ENCODE measurements at regions of chr17 and their contacts with region 1.

Region 1: GRCh38 chr17:2029911-2030778 is at the start of gene DPH1:
- DNase-seq: peak; percentile 91
- H3K4me3 Mint-ChIP-seq: peak within 1 kb of the TSS; percentile 94
- H3K27ac Mint-ChIP-seq: peak within 1 kb of the TSS; percentile 61
- H3K4me1 Mint-ChIP-seq: peaks cover 29% of the 10 kb centered on the region
- H3K27me3 Mint-ChIP-seq: peaks cover 24% of the 10 kb centered on the region
- total RNA-seq, gene DPH1: 31.1 to 34.1 TPM

Region 2: DNA sequence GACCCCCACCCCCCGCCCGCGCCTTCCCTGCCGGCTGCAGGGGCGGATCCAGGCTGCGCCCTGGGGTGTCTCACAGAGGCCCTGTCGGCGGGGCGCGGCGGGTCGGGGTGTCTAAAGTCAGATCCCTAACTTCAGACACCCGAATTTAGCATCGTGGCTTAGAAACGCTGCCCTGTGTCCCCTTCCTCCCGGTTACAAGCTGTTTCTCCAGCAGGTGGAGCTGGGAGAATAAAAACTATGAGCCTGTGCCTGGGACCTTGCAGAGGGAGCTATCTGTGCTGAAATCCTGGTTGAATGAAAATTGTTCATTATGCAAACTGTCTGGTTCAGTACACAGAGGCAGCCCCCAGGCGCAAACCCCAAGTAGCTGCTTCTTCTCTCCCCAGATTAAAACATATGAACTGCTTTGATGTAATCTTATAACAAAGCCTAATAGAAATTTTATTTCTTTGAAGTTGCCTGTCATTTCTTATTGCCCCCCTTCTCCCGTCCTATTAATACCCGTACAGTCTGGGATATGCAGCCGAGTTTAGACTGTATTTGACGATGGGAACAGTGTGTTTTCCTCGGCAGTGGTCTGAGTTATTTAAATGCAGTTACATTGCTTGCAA is 121.3 kb before region 1 on chr17:
- CTCF ChIA-PET with region 1: interaction called, 8 read pairs
- intact Hi-C with region 1: loop called (anchors 1 kb)
- DNase-seq: peak; percentile 68
- H3K4me3 Mint-ChIP-seq: peak overlapping the region; percentile 18
- H3K27ac Mint-ChIP-seq: no peak overlapping the region
- H3K4me1 Mint-ChIP-seq: peaks cover 8% of the 10 kb centered on the region
- H3K27me3 Mint-ChIP-seq: peaks cover 51% of the 10 kb centered on the region

Region 3: GRCh38 chr17:2041561-2042366 is 11.6 kb after region 1 on chr17 and contains the start of gene OVCA2:
- CTCF ChIA-PET with region 1: no interaction called
- intact Hi-C with region 1: loop called (anchors 1 kb)
- DNase-seq: peak; percentile 97
- H3K4me3 Mint-ChIP-seq: peak within 1 kb of the TSS; percentile 94
- H3K27ac Mint-ChIP-seq: peak within 1 kb of the TSS; percentile 93
- H3K4me1 Mint-ChIP-seq: peaks cover 27% of the 10 kb centered on the region
- H3K27me3 Mint-ChIP-seq: no peaks in the 10 kb centered on the region
- total RNA-seq, gene OVCA2: 22.7 to 24.7 TPM

Region 4: DNA sequence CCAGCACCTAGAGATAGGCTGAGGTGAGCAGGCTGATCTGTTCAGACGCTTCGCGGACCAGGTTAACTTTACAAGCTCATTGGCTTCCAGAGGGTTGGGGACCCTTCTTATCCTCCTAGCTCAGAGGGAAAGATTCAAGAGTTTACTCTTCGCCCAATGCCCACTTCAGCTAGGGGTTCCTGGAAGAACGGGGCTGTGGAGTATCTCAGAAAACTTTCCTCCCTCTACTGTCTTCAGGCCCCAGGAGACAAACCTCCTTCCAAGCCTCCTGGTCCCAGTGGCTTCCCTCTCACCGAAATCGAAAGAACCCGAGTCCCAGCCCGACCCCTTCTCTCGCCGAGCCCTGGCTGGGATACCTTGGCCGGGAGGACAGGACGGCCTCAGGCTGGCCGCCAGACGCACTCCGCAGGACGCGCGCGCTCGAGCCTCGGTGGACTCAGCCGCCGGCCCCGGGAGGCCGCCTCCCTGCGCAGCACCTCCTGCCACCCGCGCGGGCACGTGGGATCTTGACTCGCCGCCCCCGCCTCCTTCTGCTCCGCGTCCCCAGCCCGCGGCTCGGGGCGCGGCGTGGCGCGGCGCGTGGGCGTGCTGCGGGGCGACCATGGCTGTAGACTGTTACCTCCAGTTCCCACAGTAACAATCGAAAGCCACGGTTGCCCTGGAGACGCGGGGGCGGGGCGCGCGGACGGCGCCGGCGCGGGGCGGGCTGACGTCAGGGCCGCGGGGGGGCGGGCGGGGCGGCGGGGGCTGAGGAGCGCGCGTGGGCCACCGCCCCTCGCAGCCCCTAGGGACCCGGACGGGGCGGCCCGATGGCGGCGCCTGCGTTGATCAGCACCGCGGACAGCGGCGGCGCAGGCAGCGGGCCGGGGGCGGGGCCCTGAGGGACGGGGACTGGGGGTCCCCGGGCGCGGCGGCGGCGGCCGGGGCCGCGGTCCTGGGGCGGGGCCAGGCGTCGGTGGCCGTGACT is 19.5 kb after region 1 on chr17:
- CTCF ChIA-PET with region 1: interaction called, 3 read pairs
- intact Hi-C with region 1: loop called (anchors 2 kb)
- DNase-seq: peak; percentile 83
- H3K4me3 Mint-ChIP-seq: peak overlapping the region; percentile 63
- H3K27ac Mint-ChIP-seq: no peak overlapping the region
- H3K4me1 Mint-ChIP-seq: peaks cover 20% of the 10 kb centered on the region
- H3K27me3 Mint-ChIP-seq: peaks cover 17% of the 10 kb centered on the region

Measured in activated naive CD4-positive, alpha-beta T cell treated with anti-CD3 and anti-CD28 coated beads for 36 hours (primary cell).